ENCODE measurements at regions of chr15 and their contacts with region 1.

Region 1: GRCh38 chr15:41544650-41545015 is 576 bp upstream of the RPAP1 start:
- DNase-seq: peak in 20 of 35 experiments; percentile 6 to 61 (median 22)
- ATAC-seq: peak in 1 of 4 experiments; percentile 8
- H3K4me3 ChIP-seq: peak overlapping the region; percentile 66 to 99
- H3K4me3 Mint-ChIP-seq: peak overlapping the region; percentile 92 to 94 (median 93)
- H3K27ac ChIP-seq: no peak overlapping the region
- H3K27ac Mint-ChIP-seq: peak overlapping the region; percentile 9 to 90
- H3K4me1 ChIP-seq: peaks cover 5 to 15% of the 10 kb centered on the region in 2 experiments
- H3K4me1 Mint-ChIP-seq: peaks cover 15 to 34% (median 17%) of the 10 kb centered on the region in 3 donors
- H3K27me3 ChIP-seq: peaks cover 0 to 5% of the 10 kb centered on the region in 2 experiments
- H3K27me3 Mint-ChIP-seq: no peaks in the 10 kb centered on the region

Region 2: DNA sequence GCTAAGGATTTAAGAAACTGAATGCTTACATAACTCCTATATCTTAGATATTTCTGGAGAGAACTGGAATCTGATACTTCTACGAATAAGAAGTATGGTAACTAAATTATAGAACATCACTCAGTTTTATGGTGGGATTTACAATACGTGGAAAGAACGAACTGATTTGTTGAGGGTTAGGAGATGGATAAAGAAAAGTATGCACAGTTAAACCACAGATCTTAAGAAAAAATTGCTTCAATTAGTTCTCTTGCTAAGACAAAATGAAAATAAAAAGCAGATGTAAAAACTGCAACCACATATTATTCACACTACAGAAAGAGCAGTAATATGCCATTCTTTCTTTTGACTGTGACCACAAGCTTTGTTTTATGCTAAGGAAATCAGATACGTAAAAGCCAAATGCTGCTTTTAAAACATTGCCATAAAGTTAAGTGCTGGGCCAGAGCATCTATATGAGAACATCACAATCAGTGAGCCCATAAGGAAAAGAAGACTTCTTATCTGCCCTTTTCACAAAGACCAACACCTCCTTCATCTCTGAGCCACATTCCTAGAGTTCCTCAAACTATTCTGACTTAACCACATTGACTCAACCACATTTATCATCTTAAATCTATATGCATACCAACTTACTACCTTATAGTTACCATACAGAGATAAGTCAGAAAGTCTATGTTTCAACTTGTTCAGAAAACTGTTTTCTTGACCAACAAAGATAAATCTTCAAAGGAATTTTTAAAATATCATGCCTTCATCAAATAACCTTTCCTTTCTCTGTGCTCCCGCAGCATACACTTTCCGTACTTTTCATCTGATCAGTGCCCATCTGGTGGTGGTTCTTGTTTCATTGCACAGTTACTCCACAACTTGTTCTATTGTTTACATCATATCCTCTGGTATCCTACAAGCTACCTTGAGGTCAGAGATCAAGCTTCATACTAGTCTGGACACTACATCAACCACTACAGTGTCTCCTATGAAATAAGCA is 1823.7 kb before region 1 on chr15:
- CTCF ChIA-PET with region 1: no interaction called
- POLR2A ChIA-PET with region 1: no interaction called
- DNase-seq: no peak
- ATAC-seq: no peak
- H3K4me3 ChIP-seq: no peak overlapping the region
- H3K4me3 Mint-ChIP-seq: no peak overlapping the region
- H3K27ac ChIP-seq: no peak overlapping the region
- H3K27ac Mint-ChIP-seq: no peak overlapping the region
- H3K4me1 ChIP-seq: no peaks in the 10 kb centered on the region
- H3K4me1 Mint-ChIP-seq: no peaks in the 10 kb centered on the region
- H3K27me3 ChIP-seq: no peaks in the 10 kb centered on the region
- H3K27me3 Mint-ChIP-seq: peaks cover 6 to 7% of the 10 kb centered on the region in 2 donors

Region 3: DNA sequence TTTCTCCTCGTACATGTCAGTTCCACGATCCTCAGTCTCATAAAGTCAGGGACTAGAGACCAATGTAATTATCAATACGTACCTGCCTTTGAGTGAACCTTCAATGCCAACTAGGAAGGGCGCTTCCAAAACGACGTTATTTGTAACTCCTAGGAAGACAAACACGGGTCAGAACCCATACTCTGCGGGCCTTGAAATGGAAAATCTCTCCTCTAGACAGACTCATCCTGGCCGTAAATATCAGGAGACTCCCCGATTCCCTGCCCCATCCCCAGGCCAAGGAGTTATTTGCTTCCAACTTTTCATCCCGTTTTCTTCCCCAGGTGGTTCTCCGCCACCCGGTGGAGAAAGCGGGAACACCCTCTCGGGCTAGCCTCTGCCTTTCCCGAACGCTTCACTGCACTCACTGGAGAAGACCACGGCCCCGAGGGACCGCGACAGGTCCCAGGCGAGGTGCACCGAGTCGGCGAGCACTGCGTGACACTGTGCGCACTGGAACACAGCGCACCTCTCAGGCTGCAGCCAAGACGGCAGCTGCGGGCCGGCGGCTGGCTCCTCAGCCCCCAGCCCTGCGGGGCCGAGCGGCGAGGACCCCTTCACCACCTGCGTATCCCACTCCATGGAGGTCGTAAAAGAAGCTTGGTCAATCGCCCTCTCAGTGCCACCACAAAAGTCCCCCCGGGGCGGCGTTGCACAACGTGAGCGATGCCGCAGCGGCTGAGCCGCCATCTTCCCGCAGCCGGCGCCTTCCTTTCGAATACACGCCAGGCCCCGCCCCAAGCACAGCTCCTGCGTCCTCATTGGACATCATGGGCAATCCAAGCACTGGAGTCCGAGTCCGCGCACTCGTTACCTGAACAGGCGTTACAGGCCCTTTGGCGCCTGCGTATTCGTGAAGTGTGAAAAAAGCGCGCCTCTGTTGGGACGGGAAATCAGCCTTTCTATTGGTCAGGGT is 212.5 kb before region 1 on chr15 and contains the start of gene OIP5:
- CTCF ChIA-PET with region 1: no interaction called
- POLR2A ChIA-PET with region 1: interaction called in 1 of 2 experiments, 10 read pairs
- DNase-seq: peak; percentile 93 to 99 (median 98)
- ATAC-seq: peak; percentile 96 to 97 (median 97)
- H3K4me3 ChIP-seq: peak within 1 kb of the TSS; percentile 70 to 97
- H3K4me3 Mint-ChIP-seq: peak within 1 kb of the TSS; percentile 90 to 99 (median 97)
- H3K27ac ChIP-seq: peak within 1 kb of the TSS; percentile 50
- H3K27ac Mint-ChIP-seq: peak within 1 kb of the TSS; percentile 76 to 94
- H3K4me1 ChIP-seq: peaks cover 8 to 9% of the 10 kb centered on the region in 2 experiments
- H3K4me1 Mint-ChIP-seq: peaks cover 23 to 36% (median 26%) of the 10 kb centered on the region in 3 donors
- H3K27me3 ChIP-seq: no peaks in the 10 kb centered on the region
- H3K27me3 Mint-ChIP-seq: no peaks in the 10 kb centered on the region
- total RNA-seq, gene OIP5: 0.58 to 0.82 (median 0.70) TPM in 3 of 5 donors, not detected in the others

Region 4: DNA sequence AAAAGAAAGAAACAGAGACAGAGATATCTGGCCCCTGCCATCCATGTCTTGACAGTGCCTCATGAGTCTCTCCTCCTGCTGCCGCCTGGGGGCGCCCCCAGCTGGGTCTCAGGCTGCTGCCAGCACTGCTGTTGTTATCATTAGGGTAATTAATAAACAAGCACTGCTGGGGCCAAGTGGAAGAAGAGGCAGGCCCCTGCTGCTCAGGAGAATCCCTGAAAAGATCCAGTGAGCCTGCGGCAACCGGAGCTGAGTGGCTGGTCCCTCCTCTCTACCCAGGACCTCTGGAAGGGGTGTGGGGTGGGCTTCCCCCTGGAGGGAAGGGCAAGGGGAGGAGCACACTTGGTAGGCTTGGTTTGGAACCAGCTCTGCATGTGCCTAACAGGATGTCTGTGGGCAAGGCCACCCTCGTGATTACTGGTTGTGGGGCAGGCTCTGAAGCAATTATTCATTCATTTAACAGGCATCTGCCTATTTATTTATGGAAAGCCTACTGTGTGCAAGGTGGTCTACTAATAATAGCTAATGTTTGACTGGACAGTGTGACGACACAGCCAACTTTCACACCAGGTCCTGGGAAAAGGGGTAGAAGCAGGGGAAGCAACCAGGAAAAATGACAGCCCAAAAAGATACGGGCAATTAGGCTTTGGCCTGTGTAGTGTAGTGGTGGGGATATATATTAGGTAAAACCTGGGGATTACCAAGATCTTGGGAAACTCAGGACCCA is 13.2 kb after region 1 on chr15:
- CTCF ChIA-PET with region 1: interaction called in 1 of 2 experiments, 21 read pairs
- POLR2A ChIA-PET with region 1: no interaction called
- DNase-seq: peak; percentile 59 to 84 (median 74)
- ATAC-seq: peak; percentile 81 to 91 (median 83)
- H3K4me3 ChIP-seq: peak overlapping the region; percentile 43 to 52
- H3K4me3 Mint-ChIP-seq: peak overlapping the region; percentile 84 to 89 (median 86)
- H3K27ac ChIP-seq: peak overlapping the region; percentile 51
- H3K27ac Mint-ChIP-seq: peak overlapping the region; percentile 93 to 94
- H3K4me1 ChIP-seq: peaks cover 8 to 22% of the 10 kb centered on the region in 2 experiments
- H3K4me1 Mint-ChIP-seq: peaks cover 20 to 29% (median 23%) of the 10 kb centered on the region in 3 donors
- H3K27me3 ChIP-seq: peaks cover 2 to 34% of the 10 kb centered on the region in 2 experiments
- H3K27me3 Mint-ChIP-seq: peaks cover 10 to 21% of the 10 kb centered on the region in 2 donors

Region 5: DNA sequence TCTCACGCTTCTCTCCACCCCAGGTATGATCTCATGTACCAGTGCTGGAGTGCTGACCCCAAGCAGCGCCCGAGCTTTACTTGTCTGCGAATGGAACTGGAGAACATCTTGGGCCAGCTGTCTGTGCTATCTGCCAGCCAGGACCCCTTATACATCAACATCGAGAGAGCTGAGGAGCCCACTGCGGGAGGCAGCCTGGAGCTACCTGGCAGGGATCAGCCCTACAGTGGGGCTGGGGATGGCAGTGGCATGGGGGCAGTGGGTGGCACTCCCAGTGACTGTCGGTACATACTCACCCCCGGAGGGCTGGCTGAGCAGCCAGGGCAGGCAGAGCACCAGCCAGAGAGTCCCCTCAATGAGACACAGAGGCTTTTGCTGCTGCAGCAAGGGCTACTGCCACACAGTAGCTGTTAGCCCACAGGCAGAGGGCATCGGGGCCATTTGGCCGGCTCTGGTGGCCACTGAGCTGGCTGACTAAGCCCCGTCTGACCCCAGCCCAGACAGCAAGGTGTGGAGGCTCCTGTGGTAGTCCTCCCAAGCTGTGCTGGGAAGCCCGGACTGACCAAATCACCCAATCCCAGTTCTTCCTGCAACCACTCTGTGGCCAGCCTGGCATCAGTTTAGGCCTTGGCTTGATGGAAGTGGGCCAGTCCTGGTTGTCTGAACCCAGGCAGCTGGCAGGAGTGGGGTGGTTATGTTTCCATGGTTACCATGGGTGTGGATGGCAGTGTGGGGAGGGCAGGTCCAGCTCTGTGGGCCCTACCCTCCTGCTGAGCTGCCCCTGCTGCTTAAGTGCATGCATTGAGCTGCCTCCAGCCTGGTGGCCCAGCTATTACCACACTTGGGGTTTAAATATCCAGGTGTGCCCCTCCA is 33.5 kb after region 1 on chr15:
- CTCF ChIA-PET with region 1: no interaction called
- POLR2A ChIA-PET with region 1: no interaction called
- DNase-seq: no peak
- ATAC-seq: no peak
- H3K4me3 ChIP-seq: no peak overlapping the region
- H3K4me3 Mint-ChIP-seq: no peak overlapping the region
- H3K27ac ChIP-seq: no peak overlapping the region
- H3K27ac Mint-ChIP-seq: no peak overlapping the region
- H3K4me1 ChIP-seq: no peaks in the 10 kb centered on the region
- H3K4me1 Mint-ChIP-seq: no peaks in the 10 kb centered on the region
- H3K27me3 ChIP-seq: peaks cover 0 to 31% of the 10 kb centered on the region in 2 experiments
- H3K27me3 Mint-ChIP-seq: peaks cover under 1 to 11% of the 10 kb centered on the region in 2 donors

Region 6: DNA sequence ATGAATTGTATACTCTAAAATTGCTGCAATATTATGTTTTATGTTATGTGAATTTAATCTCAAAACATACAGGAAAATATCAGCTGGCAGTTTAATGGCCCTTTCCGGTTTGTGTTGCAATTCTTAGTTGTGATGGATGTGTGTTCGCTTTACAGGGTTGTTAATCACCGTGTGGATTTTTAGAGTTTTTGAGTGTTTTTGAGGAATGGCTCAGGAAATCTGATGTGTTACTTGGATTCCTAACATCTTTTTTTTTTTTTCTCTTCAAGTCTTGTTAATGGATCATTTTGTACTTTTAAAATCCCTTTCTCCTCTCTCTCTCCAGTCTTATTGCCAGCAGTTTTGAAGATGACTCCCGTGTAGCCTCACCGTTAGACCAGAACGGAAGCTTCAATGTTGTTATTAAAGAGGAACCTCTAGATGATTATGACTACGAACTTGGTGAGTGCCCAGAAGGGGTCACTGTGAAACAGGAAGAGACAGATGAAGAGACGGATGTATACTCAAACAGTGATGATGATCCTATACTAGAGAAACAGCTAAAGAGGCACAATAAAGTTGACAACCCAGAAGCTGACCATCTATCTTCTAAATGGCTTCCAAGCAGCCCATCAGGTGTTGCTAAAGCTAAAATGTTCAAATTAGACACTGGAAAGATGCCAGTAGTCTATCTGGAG is 151.3 kb after region 1 on chr15:
- CTCF ChIA-PET with region 1: no interaction called
- POLR2A ChIA-PET with region 1: interaction called in 1 of 2 experiments, 10 read pairs
- DNase-seq: peak in 34 of 35 experiments; percentile 1 to 73 (median 44)
- ATAC-seq: peak; percentile 90 to 98 (median 96)
- H3K4me3 ChIP-seq: peak overlapping the region in 1 of 2 donors; percentile 6
- H3K4me3 Mint-ChIP-seq: peak overlapping the region; percentile 10 to 38 (median 10)
- H3K27ac ChIP-seq: peak overlapping the region; percentile 52
- H3K27ac Mint-ChIP-seq: peak overlapping the region; percentile 75 to 82
- H3K4me1 ChIP-seq: peaks cover 6 to 7% of the 10 kb centered on the region in 2 experiments
- H3K4me1 Mint-ChIP-seq: peaks cover 50 to 72% (median 54%) of the 10 kb centered on the region in 3 donors
- H3K27me3 ChIP-seq: no peaks in the 10 kb centered on the region
- H3K27me3 Mint-ChIP-seq: no peaks in the 10 kb centered on the region

Measured in T-cell (primary cell).